ENCODE measurements at regions of chr9 and their contacts with region 1.

Region 1: GRCh38 chr9:94213511-94214124 is 45.5 kb upstream of the ZNF169 start:
- DNase-seq: peak; percentile 75 to 84 (median 82)
- H3K4me3 ChIP-seq: no peak overlapping the region
- H3K4me3 Mint-ChIP-seq: peak overlapping the region in 1 of 2 donors; percentile 71
- H3K27ac ChIP-seq: no peak overlapping the region
- H3K27ac Mint-ChIP-seq: no peak overlapping the region
- H3K4me1 ChIP-seq: no peaks in the 10 kb centered on the region
- H3K4me1 Mint-ChIP-seq: peaks cover 4% of the 10 kb centered on the region
- H3K27me3 ChIP-seq: no peaks in the 10 kb centered on the region
- H3K27me3 Mint-ChIP-seq: peaks cover 2 to 11% (median 2%) of the 10 kb centered on the region in 3 donors
- CTCF ChIP-seq: peak; percentile 81

Region 2: GRCh38 chr9:94065535-94065961 is 148.1 kb before region 1 on chr9:
- intact Hi-C with region 1: loop called (anchors 2 kb)
- DNase-seq: peak; percentile 49 to 67 (median 66)
- H3K4me3 ChIP-seq: no peak overlapping the region
- H3K4me3 Mint-ChIP-seq: no peak overlapping the region
- H3K27ac ChIP-seq: no peak overlapping the region
- H3K27ac Mint-ChIP-seq: peak overlapping the region in 1 of 7 donors; percentile 32
- H3K4me1 ChIP-seq: no peaks in the 10 kb centered on the region
- H3K4me1 Mint-ChIP-seq: peaks cover 4% of the 10 kb centered on the region
- H3K27me3 ChIP-seq: no peaks in the 10 kb centered on the region
- H3K27me3 Mint-ChIP-seq: no peaks in the 10 kb centered on the region
- CTCF ChIP-seq: peak; percentile 98

Region 3: DNA sequence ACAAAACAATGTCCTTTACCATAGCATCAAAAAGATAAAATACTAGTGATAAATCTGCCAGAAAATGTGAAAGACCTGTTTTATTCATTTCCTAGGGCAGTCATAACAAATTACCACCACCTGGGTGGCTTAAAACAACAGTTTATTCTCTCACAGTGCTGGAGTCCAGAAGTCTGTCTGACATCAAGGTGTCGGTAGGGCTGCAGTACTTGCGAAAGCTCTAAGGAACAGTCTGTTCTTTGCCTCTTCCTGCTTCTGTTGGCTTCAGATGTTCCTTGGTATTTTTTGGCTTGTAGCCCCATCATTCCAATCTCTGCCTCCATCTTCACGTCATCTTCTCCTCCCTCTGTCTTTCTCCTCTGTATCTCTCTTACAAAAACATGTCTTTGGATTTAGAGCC is 78.4 kb before region 1 on chr9:
- intact Hi-C with region 1: no loop called
- DNase-seq: no peak
- H3K4me3 ChIP-seq: no peak overlapping the region
- H3K4me3 Mint-ChIP-seq: no peak overlapping the region
- H3K27ac ChIP-seq: no peak overlapping the region
- H3K27ac Mint-ChIP-seq: no peak overlapping the region
- H3K4me1 ChIP-seq: no peaks in the 10 kb centered on the region
- H3K4me1 Mint-ChIP-seq: peaks cover 3% of the 10 kb centered on the region
- H3K27me3 ChIP-seq: no peaks in the 10 kb centered on the region
- H3K27me3 Mint-ChIP-seq: peaks cover 0 to 9% (median 0%) of the 10 kb centered on the region in 3 donors
- CTCF ChIP-seq: no peak